BJ (cell line): ENCODE measurements at regions of chr11 and their contacts with region 1.

Region 1: DNA sequence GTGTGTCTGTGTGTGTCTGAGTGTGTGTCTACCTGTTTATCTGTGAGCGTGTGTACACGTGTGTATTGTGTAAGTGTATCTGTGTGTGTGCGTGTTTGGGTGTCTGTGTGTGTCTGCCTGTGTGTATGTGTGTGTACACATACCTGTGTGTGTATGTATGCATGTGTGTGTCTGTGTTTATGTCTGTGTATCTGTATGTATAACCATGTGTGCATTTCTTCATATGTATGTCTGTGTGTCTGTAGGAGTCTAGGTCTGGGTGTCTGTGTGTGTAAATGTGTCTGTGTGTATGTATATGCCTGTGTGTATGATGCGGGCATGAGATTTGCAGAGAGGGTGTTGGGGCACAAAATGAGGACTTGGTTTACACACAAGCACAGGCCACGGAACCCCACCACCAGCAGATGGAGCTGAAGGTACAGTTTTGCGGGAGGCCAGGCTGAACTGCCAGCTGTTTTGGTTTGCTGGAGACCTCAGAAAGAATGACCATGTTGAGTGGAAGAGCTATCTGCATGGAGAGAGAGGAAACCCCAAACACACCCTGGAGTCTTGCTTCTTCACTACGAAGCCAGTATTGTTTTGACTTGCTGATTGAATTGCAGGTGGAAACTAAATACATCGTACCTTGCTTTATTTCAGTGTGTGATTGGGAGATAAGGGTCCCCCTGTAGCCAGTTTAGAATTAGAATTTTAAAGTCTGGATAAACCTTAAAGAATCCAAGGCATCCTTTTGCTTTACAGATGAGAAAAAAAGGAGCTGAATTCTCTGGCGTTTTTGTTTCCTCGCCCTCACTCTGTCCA is 497.2 kb downstream of the NTM start:
- DNase-seq: peak; percentile 18
- H3K4me3 ChIP-seq: no peak overlapping the region
- H3K27me3 ChIP-seq: no peaks in the 10 kb centered on the region
- CTCF ChIP-seq: peak; percentile 94

Region 2: GRCh38 chr11:131880316-131880715 is 12.7 kb after region 1 on chr11:
- CTCF ChIA-PET with region 1: interaction called, 13 read pairs
- POLR2A ChIA-PET with region 1: no interaction called
- DNase-seq: no peak
- H3K4me3 ChIP-seq: no peak overlapping the region
- H3K27me3 ChIP-seq: no peaks in the 10 kb centered on the region; the same call in 1 of the 2 replicates
- CTCF ChIP-seq: no peak

Region 3: DNA sequence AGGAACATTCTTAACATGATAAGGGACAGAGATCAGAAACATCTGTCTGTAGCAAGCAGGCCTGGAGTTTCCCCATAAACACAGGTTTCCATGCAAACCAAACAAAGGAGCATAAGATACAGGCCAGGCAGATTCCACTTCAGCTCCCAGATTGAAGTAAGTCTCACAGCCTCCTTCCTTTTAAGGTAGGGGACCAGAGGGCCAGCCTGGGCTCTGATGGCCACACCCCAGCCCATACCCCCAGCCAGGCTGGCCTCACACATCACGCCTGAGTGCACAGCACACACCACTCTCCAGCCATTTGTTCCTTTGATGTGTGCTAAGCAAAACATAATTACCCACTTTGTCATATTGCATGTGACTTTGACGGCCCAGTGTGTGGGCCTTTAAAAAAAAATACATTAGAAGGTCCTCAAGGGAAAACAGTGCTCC is 21.5 kb after region 1 on chr11:
- CTCF ChIA-PET with region 1: interaction called, 30 read pairs
- POLR2A ChIA-PET with region 1: no interaction called
- DNase-seq: peak; percentile 76
- H3K4me3 ChIP-seq: no peak overlapping the region
- H3K27me3 ChIP-seq: no peaks in the 10 kb centered on the region
- CTCF ChIP-seq: no peak

Region 4: GRCh38 chr11:131894615-131895544 is 27.2 kb after region 1 on chr11:
- CTCF ChIA-PET with region 1: interaction called, 30 read pairs
- POLR2A ChIA-PET with region 1: no interaction called
- DNase-seq: no peak
- H3K4me3 ChIP-seq: no peak overlapping the region
- H3K27me3 ChIP-seq: no peaks in the 10 kb centered on the region
- CTCF ChIP-seq: no peak

Region 5: GRCh38 chr11:132126973-132127899 is 259.6 kb after region 1 on chr11:
- CTCF ChIA-PET with region 1: interaction called, 101 read pairs
- POLR2A ChIA-PET with region 1: interaction called, 5 read pairs
- DNase-seq: peak; percentile 26
- H3K4me3 ChIP-seq: peak overlapping the region; percentile 19
- H3K27me3 ChIP-seq: no peaks in the 10 kb centered on the region
- CTCF ChIP-seq: peak; percentile 79

Region 6: DNA sequence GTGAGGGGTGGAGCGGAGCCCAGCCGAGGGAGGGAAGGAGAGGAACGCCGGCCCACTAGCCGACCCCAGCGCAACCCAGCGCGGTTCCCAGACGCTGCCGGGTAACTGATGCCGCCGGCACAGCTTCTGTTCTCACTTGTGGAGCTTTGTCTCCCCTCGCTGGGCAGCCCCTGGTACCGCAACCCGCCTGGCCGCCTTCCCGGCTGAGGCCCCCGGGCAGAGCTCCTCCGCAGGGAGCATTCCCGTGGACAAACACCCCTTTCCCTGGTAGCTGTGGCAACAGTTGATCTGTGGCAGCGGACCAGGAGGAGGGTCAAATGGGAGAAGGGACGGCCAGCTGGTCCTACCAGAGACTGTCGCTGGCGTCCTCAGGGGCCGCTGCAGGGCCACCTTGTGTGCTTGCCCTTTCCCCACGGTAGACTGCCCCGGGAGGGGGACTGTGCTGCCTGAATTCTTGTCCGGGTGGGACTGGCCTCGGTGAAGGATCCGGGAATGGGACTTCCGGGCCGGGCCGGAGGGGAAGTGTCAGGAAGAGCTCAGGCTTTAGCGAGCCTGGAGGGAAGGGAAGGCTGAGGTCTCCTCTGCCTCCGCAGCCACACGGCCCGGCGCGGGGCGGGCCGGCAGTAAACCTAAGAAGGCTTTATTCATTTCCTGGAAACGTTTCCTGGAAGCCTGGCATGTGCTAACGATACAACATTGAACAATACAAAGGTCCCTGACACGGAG is 1196.7 kb after region 1 on chr11:
- CTCF ChIA-PET with region 1: interaction called, 12 read pairs
- POLR2A ChIA-PET with region 1: no interaction called
- DNase-seq: no peak
- H3K4me3 ChIP-seq: peak overlapping the region; percentile 57
- H3K27me3 ChIP-seq: peaks cover 4% of the 10 kb centered on the region; the same call in 1 of the 2 replicates
- CTCF ChIP-seq: peak; percentile 79